ENCODE measurements at regions of chr15 and their contacts with region 1.

Region 1: DNA sequence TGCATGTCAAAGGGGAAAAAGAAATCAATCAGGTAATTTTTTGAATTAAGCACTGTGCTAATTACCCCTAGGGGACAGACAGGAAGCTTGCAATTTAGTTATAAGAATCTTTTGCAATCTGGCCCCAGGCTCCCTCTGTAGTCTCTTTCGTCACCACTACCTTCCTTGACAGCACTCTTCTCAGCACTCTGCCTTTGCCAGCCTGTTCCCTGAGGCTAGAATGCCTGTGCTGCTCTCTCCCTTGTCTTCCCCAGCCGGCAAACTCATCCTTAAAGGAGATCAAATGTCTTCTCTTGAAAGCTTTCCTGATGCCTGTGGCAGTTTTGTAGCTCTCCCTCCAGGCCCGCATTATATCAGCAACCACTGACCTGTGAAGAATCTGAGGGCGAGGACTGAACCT is 32.4 kb upstream of the PRTG start:
- H3K4me3 ChIP-seq: no peak overlapping the region
- H3K27ac ChIP-seq: no peak overlapping the region
- H3K4me1 ChIP-seq: no peaks in the 10 kb centered on the region
- CTCF ChIP-seq: no peak

Region 2: GRCh38 chr15:55764398-55764797 is 10.9 kb before region 1 on chr15:
- CTCF ChIA-PET with region 1: interaction called, 13 read pairs
- POLR2A ChIA-PET with region 1: no interaction called
- H3K4me3 ChIP-seq: no peak overlapping the region
- H3K27ac ChIP-seq: no peak overlapping the region
- H3K4me1 ChIP-seq: no peaks in the 10 kb centered on the region
- CTCF ChIP-seq: no peak

Region 3: DNA sequence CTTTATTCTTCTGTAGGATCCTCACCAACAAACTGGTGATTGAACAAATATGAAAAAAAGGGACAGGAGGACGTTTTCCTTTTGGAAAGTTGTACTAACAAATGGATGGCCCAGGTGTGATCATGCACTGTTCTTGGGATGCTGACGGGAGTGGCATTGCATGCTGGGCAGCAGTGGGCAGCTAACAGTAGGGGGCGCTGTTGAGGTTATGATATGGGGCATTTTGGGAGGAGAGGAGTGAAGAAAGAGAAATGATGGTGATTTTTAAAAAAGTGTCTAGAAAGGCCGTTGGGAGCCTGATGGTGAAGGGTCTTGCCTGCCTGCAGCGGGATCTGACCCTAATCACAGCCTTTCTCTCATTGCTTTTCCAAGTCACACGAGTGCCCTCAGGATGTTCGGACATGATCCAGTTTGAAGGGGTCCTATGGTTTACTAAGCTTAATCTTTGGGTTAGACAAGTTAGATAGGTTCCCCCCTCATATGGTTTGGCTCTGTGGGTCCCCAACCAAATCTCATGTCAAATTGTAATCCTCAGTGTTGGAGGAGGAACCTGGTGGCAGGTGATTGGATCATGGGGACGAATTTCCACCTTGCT is 13.8 kb after region 1 on chr15:
- CTCF ChIA-PET with region 1: interaction called, 12 read pairs
- POLR2A ChIA-PET with region 1: no interaction called
- H3K4me3 ChIP-seq: no peak overlapping the region
- H3K27ac ChIP-seq: no peak overlapping the region
- H3K4me1 ChIP-seq: peaks cover 9% of the 10 kb centered on the region; the same call in 1 of the 2 replicates
- CTCF ChIP-seq: 0 out of 2 replicates have a peak, but pooled peaks have one; percentile 31

Measured in HEK293 (cell line).